H1 (cell line): ENCODE measurements at regions of chr1 and their contacts with region 1.

Region 1: GRCh38 chr1:204806943-204807687 is 63.5 kb upstream of the NFASC start:
- DNase-seq: peak; percentile 64 to 97
- H3K4me3 ChIP-seq: peak overlapping the region; percentile 19 to 85 (median 70); a peak in 7 of 8 replicates
- H3K27ac ChIP-seq: no peak overlapping the region
- H3K4me1 ChIP-seq: peaks cover 0 to 4% (median 0%) of the 10 kb centered on the region in 4 experiments; a peak in 2 of 7 replicates
- H3K27me3 ChIP-seq: no peaks in the 10 kb centered on the region
- CTCF ChIP-seq: peak; percentile 73 to 99 (median 92)
- EP300 ChIP-seq: peak in 1 of 2 experiments; percentile 49; a peak in 1 of 3 replicates
- POLR2A ChIP-seq: no peak
- RAD21 ChIP-seq: peak; percentile 84 to 88

Region 2: GRCh38 chr1:204607910-204608309 is 199.2 kb before region 1 on chr1:
- CTCF ChIA-PET with region 1: interaction called, 23 read pairs
- POLR2A ChIA-PET with region 1: no interaction called
- DNase-seq: no peak
- H3K4me3 ChIP-seq: no peak overlapping the region
- H3K27ac ChIP-seq: no peak overlapping the region
- H3K4me1 ChIP-seq: peaks cover 0 to 3% (median under 1%) of the 10 kb centered on the region in 4 experiments; a peak in 2 of 7 replicates
- H3K27me3 ChIP-seq: no peaks in the 10 kb centered on the region
- CTCF ChIP-seq: no peak
- EP300 ChIP-seq: no peak
- POLR2A ChIP-seq: no peak
- RAD21 ChIP-seq: no peak

Region 3: GRCh38 chr1:204670152-204670927 is 136.8 kb before region 1 on chr1:
- CTCF ChIA-PET with region 1: interaction called, 11 read pairs
- POLR2A ChIA-PET with region 1: no interaction called
- DNase-seq: no peak
- H3K4me3 ChIP-seq: no peak overlapping the region
- H3K27ac ChIP-seq: no peak overlapping the region
- H3K4me1 ChIP-seq: peaks cover 0 to 6% (median 3%) of the 10 kb centered on the region in 4 experiments; a peak in 3 of 7 replicates
- H3K27me3 ChIP-seq: no peaks in the 10 kb centered on the region; a peak in 2 of 7 replicates
- CTCF ChIP-seq: no peak
- EP300 ChIP-seq: no peak
- POLR2A ChIP-seq: no peak
- RAD21 ChIP-seq: no peak

Region 4: DNA sequence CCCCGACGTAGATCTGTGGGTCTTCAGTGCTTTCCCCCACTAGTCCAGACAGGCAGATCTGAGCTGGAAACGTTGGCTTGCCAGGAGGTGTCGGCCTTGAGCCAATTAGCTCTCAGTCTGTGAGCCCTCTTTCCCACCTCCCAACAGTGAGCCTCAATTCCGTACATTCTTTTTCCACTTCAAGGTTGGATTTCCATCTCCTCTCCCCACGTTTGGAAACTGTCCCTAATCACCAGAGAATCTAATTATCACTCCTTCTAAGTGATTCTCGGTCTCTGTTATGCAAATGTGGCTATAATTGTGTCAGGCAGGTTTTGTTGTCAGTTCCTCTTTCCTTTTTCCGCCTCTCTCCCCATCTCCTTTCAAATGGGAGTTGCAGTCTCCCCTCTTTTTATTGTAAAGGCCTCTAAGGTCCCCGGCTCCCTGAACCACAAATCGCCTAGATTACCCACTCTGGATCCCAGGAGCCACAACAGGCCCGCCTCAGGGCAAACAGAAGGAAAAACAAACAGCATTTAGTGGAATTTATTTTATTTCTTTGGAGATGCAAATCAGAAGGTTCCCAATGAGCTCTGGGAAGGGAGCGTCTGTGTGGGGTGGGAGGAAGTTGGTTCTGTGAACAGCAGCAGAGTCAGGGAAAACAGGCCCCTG is 92.1 kb before region 1 on chr1:
- CTCF ChIA-PET with region 1: interaction called, 31 read pairs
- POLR2A ChIA-PET with region 1: no interaction called
- DNase-seq: no peak
- H3K4me3 ChIP-seq: peak overlapping the region in 1 of 4 experiments; percentile 38; a peak in 2 of 8 replicates
- H3K27ac ChIP-seq: no peak overlapping the region
- H3K4me1 ChIP-seq: peaks cover 12 to 29% (median 20%) of the 10 kb centered on the region in 4 experiments
- H3K27me3 ChIP-seq: peaks cover 22 to 54% (median 46%) of the 10 kb centered on the region in 4 experiments
- CTCF ChIP-seq: peak; percentile 55 to 72 (median 65)
- EP300 ChIP-seq: no peak
- POLR2A ChIP-seq: no peak
- RAD21 ChIP-seq: peak; percentile 69 to 74

Region 5: GRCh38 chr1:204763706-204764427 is 43.2 kb before region 1 on chr1:
- CTCF ChIA-PET with region 1: interaction called, 21 read pairs
- POLR2A ChIA-PET with region 1: no interaction called
- DNase-seq: peak; percentile 77 to 89
- H3K4me3 ChIP-seq: no peak overlapping the region
- H3K27ac ChIP-seq: no peak overlapping the region
- H3K4me1 ChIP-seq: peaks cover 0 to 5% (median 2%) of the 10 kb centered on the region in 4 experiments; a peak in 4 of 7 replicates
- H3K27me3 ChIP-seq: no peaks in the 10 kb centered on the region
- CTCF ChIP-seq: peak; percentile 93 to 98 (median 98)
- EP300 ChIP-seq: peak in 1 of 2 experiments; percentile 57; a peak in 1 of 3 replicates
- POLR2A ChIP-seq: no peak
- RAD21 ChIP-seq: peak; percentile 90 to 91

Region 6: GRCh38 chr1:204858363-204858821 is 51.3 kb after region 1 on chr1:
- CTCF ChIA-PET with region 1: interaction called, 27 read pairs
- POLR2A ChIA-PET with region 1: no interaction called
- DNase-seq: no peak
- H3K4me3 ChIP-seq: no peak overlapping the region
- H3K27ac ChIP-seq: no peak overlapping the region
- H3K4me1 ChIP-seq: peaks cover 2 to 5% (median 3%) of the 10 kb centered on the region in 4 experiments; a peak in 5 of 7 replicates
- H3K27me3 ChIP-seq: no peaks in the 10 kb centered on the region
- CTCF ChIP-seq: no peak
- EP300 ChIP-seq: no peak
- POLR2A ChIP-seq: no peak
- RAD21 ChIP-seq: no peak

Region 7: DNA sequence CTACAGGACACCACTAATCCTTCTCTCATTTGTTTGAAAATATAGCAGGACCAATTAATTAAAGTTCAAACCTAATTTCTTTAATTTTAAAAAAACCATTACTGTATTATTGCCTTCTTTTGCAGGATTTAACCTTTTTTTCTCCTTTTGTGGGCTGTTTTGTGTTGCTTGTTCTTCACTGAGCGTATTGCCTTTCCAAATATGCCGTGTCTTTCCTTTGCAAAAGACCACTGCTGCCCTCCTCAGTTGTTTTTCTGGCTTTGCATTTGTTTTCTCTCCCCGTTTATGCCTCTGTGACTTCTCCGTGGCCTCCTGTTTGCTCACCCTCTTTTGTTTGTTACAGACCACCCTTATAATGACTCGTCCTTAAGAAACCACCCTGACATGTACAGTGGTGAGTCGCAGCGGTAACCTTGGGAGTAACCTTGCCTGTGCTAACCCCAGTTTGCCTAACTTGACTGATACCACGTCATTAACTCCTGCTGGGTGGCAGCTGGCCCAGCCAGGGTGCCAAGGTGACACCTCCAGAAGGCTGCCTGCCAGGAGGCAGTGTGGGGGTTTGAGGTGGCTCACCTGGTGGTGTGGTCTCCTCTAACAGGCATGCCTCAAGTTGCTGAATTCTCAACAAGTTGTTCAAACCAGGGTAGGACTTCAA is 154.8 kb after region 1 on chr1:
- CTCF ChIA-PET with region 1: interaction called, 37 read pairs
- POLR2A ChIA-PET with region 1: interaction called, 3 read pairs
- DNase-seq: no peak
- H3K4me3 ChIP-seq: no peak overlapping the region
- H3K27ac ChIP-seq: no peak overlapping the region
- H3K4me1 ChIP-seq: peaks cover 0 to 4% (median 2%) of the 10 kb centered on the region in 4 experiments; a peak in 4 of 7 replicates
- H3K27me3 ChIP-seq: no peaks in the 10 kb centered on the region
- CTCF ChIP-seq: peak in 2 of 3 experiments; percentile 40 to 47; a peak in 3 of 4 replicates
- EP300 ChIP-seq: no peak
- POLR2A ChIP-seq: no peak
- RAD21 ChIP-seq: peak; percentile 65 to 73